Mammary epithelial cell (primary cell): ENCODE measurements at regions of chr10 and their contacts with region 1.

Region 1: GRCh38 chr10:24901686-24902399 is 50.6 kb downstream of the PRTFDC1 start:
- DNase-seq: peak; percentile 93
- H3K4me3 ChIP-seq: no peak overlapping the region
- H3K27ac ChIP-seq: peak overlapping the region; percentile 39
- H3K4me1 ChIP-seq: peaks cover 26% of the 10 kb centered on the region
- H3K27me3 ChIP-seq: no peaks in the 10 kb centered on the region
- CTCF ChIP-seq: no peak

Region 2: GRCh38 chr10:24866604-24867583 is 34.9 kb before region 1 on chr10:
- CTCF ChIA-PET with region 1: no interaction called
- dilution Hi-C with region 1: no loop called
- in situ Hi-C with region 1: no loop called
- intact Hi-C with region 1: loop called (anchors 5 kb)
- DNase-seq: peak; percentile 64
- H3K4me3 ChIP-seq: no peak overlapping the region
- H3K27ac ChIP-seq: peak overlapping the region; percentile 42
- H3K4me1 ChIP-seq: peaks cover 26% of the 10 kb centered on the region
- H3K27me3 ChIP-seq: no peaks in the 10 kb centered on the region
- CTCF ChIP-seq: no peak

Region 3: GRCh38 chr10:24935504-24936292 is 33.9 kb after region 1 on chr10:
- CTCF ChIA-PET with region 1: no interaction called
- dilution Hi-C with region 1: no loop called
- in situ Hi-C with region 1: no loop called
- intact Hi-C with region 1: no loop called
- DNase-seq: no peak
- H3K4me3 ChIP-seq: no peak overlapping the region
- H3K27ac ChIP-seq: no peak overlapping the region
- H3K4me1 ChIP-seq: no peaks in the 10 kb centered on the region
- H3K27me3 ChIP-seq: no peaks in the 10 kb centered on the region
- CTCF ChIP-seq: no peak